Activated CD4-positive, alpha-beta memory T cell treated with anti-CD3 and anti-CD28 coated beads for 36 hours (primary cell): ENCODE measurements at regions of chr18 and their contacts with region 1.

Region 1: DNA sequence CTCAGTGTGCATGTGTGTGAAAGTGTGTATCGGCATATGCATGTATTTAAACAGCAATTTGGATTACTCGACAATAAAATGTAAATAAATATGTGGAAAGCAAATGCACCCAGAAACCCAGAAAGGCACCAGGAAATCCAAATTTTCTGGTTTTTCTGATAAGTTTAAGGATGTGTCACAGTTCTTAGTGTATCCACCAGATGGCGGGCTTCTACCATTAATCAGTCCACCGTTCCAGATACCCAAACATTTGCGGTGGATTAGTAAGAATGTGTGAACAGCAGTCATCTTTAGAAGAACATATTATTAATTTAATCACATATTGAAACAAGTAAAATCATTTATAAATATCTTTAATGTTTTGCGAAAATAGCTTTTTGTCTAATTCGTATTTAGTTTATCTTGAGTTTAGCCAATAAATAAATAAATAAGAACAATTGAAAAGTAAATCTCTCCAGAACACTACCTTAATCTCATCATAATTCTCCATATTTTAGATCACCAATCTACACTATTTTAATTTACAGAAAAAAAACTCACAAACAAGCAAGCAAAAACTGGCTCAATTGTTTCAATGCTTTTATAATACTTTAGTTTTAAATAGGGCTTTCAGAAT is 298.9 kb downstream of the DSEL start:
- DNase-seq: peak; percentile 58
- H3K4me3 Mint-ChIP-seq: no peak overlapping the region
- H3K27ac Mint-ChIP-seq: no peak overlapping the region
- H3K4me1 Mint-ChIP-seq: no peaks in the 10 kb centered on the region
- H3K27me3 Mint-ChIP-seq: no peaks in the 10 kb centered on the region

Region 2: GRCh38 chr18:67243799-67244587 is 26.3 kb after region 1 on chr18:
- CTCF ChIA-PET with region 1: no interaction called
- POLR2A ChIA-PET with region 1: no interaction called
- intact Hi-C with region 1: no loop called
- DNase-seq: no peak
- H3K4me3 Mint-ChIP-seq: peak overlapping the region; percentile 70
- H3K27ac Mint-ChIP-seq: peak overlapping the region; percentile 38
- H3K4me1 Mint-ChIP-seq: peaks cover 24% of the 10 kb centered on the region
- H3K27me3 Mint-ChIP-seq: no peaks in the 10 kb centered on the region

Region 3: GRCh38 chr18:68397241-68398035 is 1179.8 kb after region 1 on chr18:
- CTCF ChIA-PET with region 1: no interaction called
- POLR2A ChIA-PET with region 1: no interaction called
- intact Hi-C with region 1: no loop called
- DNase-seq: no peak
- H3K4me3 Mint-ChIP-seq: no peak overlapping the region
- H3K27ac Mint-ChIP-seq: no peak overlapping the region
- H3K4me1 Mint-ChIP-seq: no peaks in the 10 kb centered on the region
- H3K27me3 Mint-ChIP-seq: no peaks in the 10 kb centered on the region

Region 4: DNA sequence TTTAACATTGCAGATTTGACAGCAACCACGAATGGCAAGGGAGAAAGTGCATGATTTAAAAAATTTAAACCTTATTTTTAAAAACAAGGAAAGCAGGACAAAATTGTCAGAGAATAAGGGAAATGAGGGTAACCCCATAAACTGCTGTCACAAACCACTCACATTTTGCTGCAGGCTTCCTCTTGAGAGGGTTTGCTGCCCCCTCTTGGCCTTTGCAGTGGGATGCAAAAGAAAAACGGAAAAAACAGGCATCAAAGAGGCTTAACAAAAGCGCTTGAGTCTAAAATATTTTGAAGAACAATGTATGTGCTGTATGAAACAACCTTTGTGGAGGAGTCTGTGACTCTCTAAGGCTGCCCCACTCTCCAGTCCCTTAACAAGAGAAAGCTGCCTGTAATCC is 1405.7 kb after region 1 on chr18:
- CTCF ChIA-PET with region 1: no interaction called
- POLR2A ChIA-PET with region 1: no interaction called
- intact Hi-C with region 1: loop called (anchors 2 kb)
- DNase-seq: peak; percentile 37
- H3K4me3 Mint-ChIP-seq: no peak overlapping the region
- H3K27ac Mint-ChIP-seq: no peak overlapping the region
- H3K4me1 Mint-ChIP-seq: no peaks in the 10 kb centered on the region
- H3K27me3 Mint-ChIP-seq: peaks cover 2% of the 10 kb centered on the region

Region 5: GRCh38 chr18:68660354-68661183 is 1442.9 kb after region 1 on chr18:
- CTCF ChIA-PET with region 1: interaction called, 28 read pairs
- POLR2A ChIA-PET with region 1: no interaction called
- intact Hi-C with region 1: loop called (anchors 1 kb)
- DNase-seq: no peak
- H3K4me3 Mint-ChIP-seq: no peak overlapping the region
- H3K27ac Mint-ChIP-seq: no peak overlapping the region
- H3K4me1 Mint-ChIP-seq: no peaks in the 10 kb centered on the region
- H3K27me3 Mint-ChIP-seq: peaks cover 2% of the 10 kb centered on the region

Region 6: DNA sequence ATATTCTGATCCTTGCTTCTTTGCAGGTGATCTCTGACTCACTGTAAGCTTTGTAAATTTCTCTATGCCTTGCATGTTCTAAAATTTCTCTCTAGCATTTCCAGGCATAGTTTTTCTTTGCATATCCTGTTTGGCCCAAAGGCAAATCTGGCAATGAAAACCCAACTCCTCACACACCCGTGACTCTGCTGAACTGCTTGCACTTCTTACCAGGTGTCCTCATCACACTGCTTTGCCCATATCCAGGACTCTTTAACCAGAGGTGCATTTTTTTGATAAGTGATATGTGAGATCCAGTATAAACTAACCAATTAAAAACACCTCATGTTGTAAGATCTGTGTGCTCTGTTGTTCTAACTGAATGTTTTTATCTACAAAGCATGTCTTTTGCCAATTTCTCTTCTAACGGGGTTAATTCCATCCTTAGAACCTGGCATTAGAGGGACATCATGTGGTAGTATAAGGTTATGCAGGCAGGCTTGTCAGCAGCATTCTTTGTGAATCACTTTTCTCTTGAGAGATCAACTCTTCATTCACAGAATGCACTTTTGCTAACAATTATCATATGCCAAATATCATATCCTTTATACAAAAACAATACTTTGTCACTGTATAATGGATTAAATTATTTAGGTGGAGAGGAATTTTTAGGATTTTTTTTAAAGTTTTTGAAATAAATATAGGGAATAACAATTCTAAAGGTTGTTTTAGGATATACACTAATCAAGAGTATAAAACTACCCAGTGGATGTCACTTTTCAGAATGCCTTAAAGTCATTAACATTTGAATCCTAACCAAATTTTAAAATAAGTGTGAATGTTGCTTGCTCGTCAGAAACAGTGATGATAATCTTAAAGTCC is 1518.1 kb after region 1 on chr18:
- CTCF ChIA-PET with region 1: interaction called, 3 read pairs
- POLR2A ChIA-PET with region 1: no interaction called
- intact Hi-C with region 1: loop called (anchors 1 kb)
- DNase-seq: no peak
- H3K4me3 Mint-ChIP-seq: no peak overlapping the region
- H3K27ac Mint-ChIP-seq: no peak overlapping the region
- H3K4me1 Mint-ChIP-seq: no peaks in the 10 kb centered on the region
- H3K27me3 Mint-ChIP-seq: no peaks in the 10 kb centered on the region